ENCODE measurements at regions of chr15 and their contacts with region 1.

Region 1: DNA sequence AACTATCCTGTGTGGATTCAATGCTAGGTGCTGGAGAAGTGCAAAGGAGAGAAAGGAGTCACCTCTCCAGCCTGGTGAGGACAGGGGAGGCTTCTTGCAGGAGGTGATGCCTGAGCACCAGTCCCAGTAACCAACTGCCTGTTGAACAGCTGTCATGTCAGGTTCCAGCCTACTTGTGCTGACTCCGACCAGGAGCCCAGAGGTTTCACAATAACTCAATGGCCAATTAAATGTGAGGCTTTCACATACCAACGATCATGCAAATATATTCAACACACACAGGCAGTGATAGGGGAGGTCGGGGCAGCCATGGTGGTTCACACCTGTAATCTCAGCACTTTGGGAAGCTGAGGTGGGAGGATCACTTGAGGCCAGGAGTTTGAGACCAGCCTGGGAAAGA is 7.7 kb downstream of the SORD start:
- DNase-seq: peak in 1 of 2 donors; percentile 26
- H3K4me3 ChIP-seq: no peak overlapping the region
- H3K27ac ChIP-seq: peak overlapping the region; percentile 56 to 70 (median 59)
- H3K4me1 ChIP-seq: peaks cover 35 to 52% of the 10 kb centered on the region in 2 donors
- H3K27me3 ChIP-seq: no peaks in the 10 kb centered on the region
- CTCF ChIP-seq: no peak
- POLR2A ChIP-seq: no peak

Region 2: DNA sequence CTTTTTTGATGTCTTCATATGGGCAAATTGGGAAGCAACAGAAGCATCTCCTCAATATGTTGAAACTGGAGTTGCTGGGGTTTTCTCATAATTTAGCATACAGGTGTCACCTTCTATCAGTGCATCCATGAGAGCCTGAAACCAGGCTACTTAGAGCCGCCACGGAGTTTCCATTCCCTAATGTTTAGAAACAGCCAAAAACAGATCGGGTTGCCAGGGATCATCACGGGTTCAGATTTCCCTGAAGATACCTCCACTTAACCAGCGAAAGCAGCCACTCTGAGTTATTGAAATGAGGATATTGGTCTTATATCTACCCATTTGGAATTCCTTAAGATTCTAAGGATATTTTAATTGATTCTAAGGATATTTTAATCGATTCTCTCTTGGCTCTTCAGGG is 59.7 kb before region 1 on chr15:
- intact Hi-C with region 1: loop called (anchors 10 kb)
- DNase-seq: no peak
- H3K4me3 ChIP-seq: no peak overlapping the region
- H3K27ac ChIP-seq: no peak overlapping the region
- H3K4me1 ChIP-seq: peaks cover 0 to 10% of the 10 kb centered on the region in 2 donors
- H3K27me3 ChIP-seq: no peaks in the 10 kb centered on the region
- CTCF ChIP-seq: no peak
- POLR2A ChIP-seq: no peak

Region 3: DNA sequence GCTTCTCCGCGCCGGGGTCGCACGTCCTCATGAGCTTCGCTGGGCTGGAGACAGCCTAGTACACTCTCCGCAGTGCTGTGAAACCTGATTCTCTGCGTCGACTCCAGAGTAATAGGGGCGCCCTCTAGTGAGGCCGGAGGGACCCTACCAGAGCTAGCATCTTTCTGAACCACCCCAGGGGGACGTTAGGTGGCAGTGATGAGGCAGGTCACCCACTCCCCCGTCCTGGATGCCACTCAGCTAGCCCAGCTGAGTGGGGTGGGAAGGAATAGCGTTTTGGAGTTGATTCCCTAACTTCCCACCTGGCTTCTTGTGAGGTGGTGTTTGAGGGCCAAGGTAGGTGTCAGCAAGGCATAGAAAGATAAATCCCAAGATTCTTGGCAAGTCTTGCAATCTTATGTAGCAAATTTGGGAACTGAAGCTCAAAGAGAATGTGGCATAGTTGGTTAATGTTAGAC is 87.4 kb after region 1 on chr15:
- intact Hi-C with region 1: loop called (anchors 10 kb)
- DNase-seq: peak; percentile 94 to 95
- H3K4me3 ChIP-seq: no peak overlapping the region
- H3K27ac ChIP-seq: peak overlapping the region in 2 of 3 donors; percentile 8 to 61
- H3K4me1 ChIP-seq: peaks cover 33 to 50% of the 10 kb centered on the region in 2 donors
- H3K27me3 ChIP-seq: no peaks in the 10 kb centered on the region
- CTCF ChIP-seq: peak; percentile 92 to 100 (median 99)
- POLR2A ChIP-seq: no peak

Region 4: DNA sequence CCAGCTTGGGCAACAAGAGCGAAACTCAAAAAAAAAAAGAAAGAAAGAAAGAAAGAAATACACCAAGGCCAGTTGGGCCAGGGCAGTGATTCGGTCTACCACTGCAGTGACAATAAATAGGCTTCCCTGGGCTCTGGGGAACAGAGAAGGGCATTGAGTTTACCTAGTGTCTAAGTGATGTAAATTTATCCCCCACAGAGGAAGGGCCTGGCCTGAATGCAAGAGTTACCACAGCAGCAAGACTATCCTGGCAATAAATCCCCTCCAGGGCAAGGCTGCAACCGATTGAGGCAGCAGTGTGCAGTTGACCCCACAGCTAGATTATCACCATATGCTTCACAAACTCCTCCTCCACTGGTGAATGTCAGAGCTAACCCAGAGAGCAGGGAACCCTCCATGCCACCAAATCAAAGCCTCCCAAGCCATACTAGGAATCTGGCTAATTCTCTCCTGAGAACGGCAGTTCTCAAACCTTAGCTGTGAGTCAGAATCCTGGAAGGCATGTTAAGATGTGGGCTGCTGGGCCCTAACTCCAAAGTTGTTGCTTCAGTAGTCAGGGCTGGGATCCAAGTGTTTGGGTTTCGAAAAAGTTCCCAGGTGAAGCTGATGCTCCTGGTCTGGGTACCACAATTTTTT is 411.9 kb after region 1 on chr15:
- intact Hi-C with region 1: no loop called
- DNase-seq: peak; percentile 67 to 69
- H3K4me3 ChIP-seq: no peak overlapping the region
- H3K27ac ChIP-seq: peak overlapping the region; percentile 26 to 64 (median 45)
- H3K4me1 ChIP-seq: peaks cover 0 to 25% of the 10 kb centered on the region in 2 donors
- H3K27me3 ChIP-seq: no peaks in the 10 kb centered on the region
- CTCF ChIP-seq: no peak
- POLR2A ChIP-seq: no peak

Measured in thyroid gland (tissue), 4 donors.